Activated CD4-positive, alpha-beta memory T cell treated with anti-CD3 and anti-CD28 coated beads for 36 hours (primary cell): ENCODE measurements at regions of chr12 and their contacts with region 1.

Region 1: GRCh38 chr12:91811481-91812287 is 334.0 kb downstream of the BTG1 start:
- DNase-seq: peak; percentile 80
- H3K4me3 Mint-ChIP-seq: no peak overlapping the region
- H3K27ac Mint-ChIP-seq: no peak overlapping the region
- H3K4me1 Mint-ChIP-seq: peaks cover 20% of the 10 kb centered on the region
- H3K27me3 Mint-ChIP-seq: no peaks in the 10 kb centered on the region

Region 2: DNA sequence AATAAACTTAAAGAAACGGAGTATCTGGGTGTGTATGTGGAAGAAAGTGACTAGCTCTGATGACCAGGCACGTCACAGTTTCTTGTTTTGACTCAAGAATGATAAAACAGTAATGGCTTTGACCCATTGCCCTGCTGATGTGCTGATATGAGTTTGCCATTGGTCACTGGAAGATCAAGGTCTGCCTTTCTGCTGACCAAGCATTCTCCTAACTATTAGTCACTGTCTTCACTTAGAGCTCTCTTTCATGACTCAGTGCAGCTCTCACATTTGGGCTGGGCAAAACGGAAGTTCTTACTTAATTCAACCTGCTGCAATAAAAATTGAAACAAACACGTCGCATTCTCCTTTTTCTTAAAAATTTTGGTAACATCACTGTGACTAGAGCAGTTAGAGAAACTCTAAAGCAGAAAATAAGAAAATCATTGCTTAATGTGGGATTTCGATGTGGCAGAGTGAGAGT is 32.7 kb before region 1 on chr12:
- CTCF ChIA-PET with region 1: interaction called, 15 read pairs
- POLR2A ChIA-PET with region 1: no interaction called
- intact Hi-C with region 1: loop called (anchors 2 kb)
- DNase-seq: peak; percentile 65
- H3K4me3 Mint-ChIP-seq: peak overlapping the region; percentile 48
- H3K27ac Mint-ChIP-seq: peak overlapping the region; percentile 75
- H3K4me1 Mint-ChIP-seq: peaks cover 27% of the 10 kb centered on the region
- H3K27me3 Mint-ChIP-seq: peaks cover 3% of the 10 kb centered on the region

Region 3: DNA sequence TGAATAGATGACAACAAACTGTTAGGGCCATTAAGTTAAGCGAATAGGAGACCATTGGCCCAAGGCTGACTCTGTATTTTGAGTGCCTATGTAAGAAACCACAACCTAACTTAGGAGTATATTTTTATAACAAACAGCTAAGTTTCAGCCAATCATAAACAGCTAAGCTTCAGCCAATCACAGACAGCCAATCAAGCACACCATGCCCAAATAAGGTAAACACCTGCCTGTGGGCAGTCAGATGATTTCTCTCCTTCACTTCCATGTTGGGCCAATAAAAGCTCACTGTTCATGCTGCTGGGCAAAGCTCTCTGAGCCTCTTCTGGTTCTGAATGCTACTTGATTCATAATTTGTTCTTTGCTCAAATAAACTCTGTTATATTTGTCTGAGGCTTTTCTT is 10.6 kb before region 1 on chr12:
- CTCF ChIA-PET with region 1: interaction called, 31 read pairs
- POLR2A ChIA-PET with region 1: no interaction called
- intact Hi-C with region 1: no loop called
- DNase-seq: no peak
- H3K4me3 Mint-ChIP-seq: no peak overlapping the region
- H3K27ac Mint-ChIP-seq: no peak overlapping the region
- H3K4me1 Mint-ChIP-seq: peaks cover 3% of the 10 kb centered on the region
- H3K27me3 Mint-ChIP-seq: no peaks in the 10 kb centered on the region

Region 4: GRCh38 chr12:91825999-91826398 is 14.3 kb after region 1 on chr12:
- CTCF ChIA-PET with region 1: interaction called, 29 read pairs
- POLR2A ChIA-PET with region 1: no interaction called
- intact Hi-C with region 1: no loop called
- DNase-seq: no peak
- H3K4me3 Mint-ChIP-seq: no peak overlapping the region
- H3K27ac Mint-ChIP-seq: no peak overlapping the region
- H3K4me1 Mint-ChIP-seq: no peaks in the 10 kb centered on the region
- H3K27me3 Mint-ChIP-seq: no peaks in the 10 kb centered on the region

Region 5: GRCh38 chr12:91854725-91855124 is 43.0 kb after region 1 on chr12:
- CTCF ChIA-PET with region 1: interaction called, 10 read pairs
- POLR2A ChIA-PET with region 1: no interaction called
- intact Hi-C with region 1: no loop called
- DNase-seq: no peak
- H3K4me3 Mint-ChIP-seq: no peak overlapping the region
- H3K27ac Mint-ChIP-seq: no peak overlapping the region
- H3K4me1 Mint-ChIP-seq: peaks cover 31% of the 10 kb centered on the region
- H3K27me3 Mint-ChIP-seq: no peaks in the 10 kb centered on the region

Region 6: GRCh38 chr12:91958816-91959215 is 147.1 kb after region 1 on chr12:
- CTCF ChIA-PET with region 1: interaction called, 4 read pairs
- POLR2A ChIA-PET with region 1: no interaction called
- intact Hi-C with region 1: loop called (anchors 10 kb)
- DNase-seq: no peak
- H3K4me3 Mint-ChIP-seq: no peak overlapping the region
- H3K27ac Mint-ChIP-seq: no peak overlapping the region
- H3K4me1 Mint-ChIP-seq: no peaks in the 10 kb centered on the region
- H3K27me3 Mint-ChIP-seq: no peaks in the 10 kb centered on the region

Region 7: DNA sequence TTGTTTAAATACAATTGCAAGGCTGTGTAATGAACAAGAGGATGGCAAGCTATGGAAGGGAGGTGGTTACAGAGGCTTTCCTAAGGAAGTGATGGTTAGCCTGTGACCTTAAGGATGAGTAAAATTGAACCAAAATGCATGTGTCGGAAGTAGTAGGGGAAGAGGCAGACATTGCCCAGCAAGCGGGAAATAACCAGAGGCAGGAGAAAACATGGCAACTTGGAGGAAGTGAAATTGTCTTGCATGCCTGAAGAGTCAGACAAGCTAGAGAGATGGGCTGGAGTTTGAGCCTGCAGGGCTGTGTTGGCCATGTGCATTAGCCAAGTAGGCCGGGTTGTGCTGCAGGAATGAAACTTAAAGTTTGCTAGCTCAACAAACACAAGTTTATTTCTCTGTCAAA is 237.7 kb after region 1 on chr12:
- CTCF ChIA-PET with region 1: no interaction called
- POLR2A ChIA-PET with region 1: no interaction called
- intact Hi-C with region 1: loop called (anchors 5 kb)
- DNase-seq: no peak
- H3K4me3 Mint-ChIP-seq: no peak overlapping the region
- H3K27ac Mint-ChIP-seq: no peak overlapping the region
- H3K4me1 Mint-ChIP-seq: peaks cover 70% of the 10 kb centered on the region
- H3K27me3 Mint-ChIP-seq: no peaks in the 10 kb centered on the region

Region 8: DNA sequence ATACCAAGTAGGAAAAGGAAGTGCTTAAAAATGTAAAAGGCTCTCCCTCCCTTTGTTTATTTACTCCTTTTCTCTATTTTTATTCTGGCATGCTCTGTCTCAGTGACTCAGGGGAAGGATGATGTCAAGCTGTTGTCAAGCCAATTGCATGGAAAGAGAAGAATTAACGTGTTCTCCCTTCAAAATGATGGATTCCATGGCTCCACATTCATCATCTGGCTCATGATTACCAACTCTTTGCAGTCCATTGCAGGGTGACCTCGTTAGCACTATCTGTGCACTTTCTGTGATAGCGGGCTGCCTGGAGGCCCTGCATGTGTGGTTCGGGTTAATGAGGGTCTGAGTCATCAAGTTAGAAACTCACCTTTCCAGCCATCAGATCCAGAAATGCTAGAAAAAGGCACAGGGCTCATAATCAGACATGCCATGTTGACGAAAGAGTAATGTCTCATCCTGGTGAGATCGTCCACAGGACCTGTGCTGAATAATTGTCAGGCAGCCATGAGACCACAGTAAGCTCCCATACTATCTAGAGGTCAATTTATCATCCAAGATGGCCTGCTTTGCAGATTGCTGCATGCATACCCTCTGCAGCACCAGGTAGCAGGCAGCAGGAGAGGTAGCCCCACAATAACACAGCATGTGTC is 413.1 kb after region 1 on chr12:
- CTCF ChIA-PET with region 1: no interaction called
- POLR2A ChIA-PET with region 1: no interaction called
- intact Hi-C with region 1: no loop called
- DNase-seq: no peak
- H3K4me3 Mint-ChIP-seq: no peak overlapping the region
- H3K27ac Mint-ChIP-seq: no peak overlapping the region
- H3K4me1 Mint-ChIP-seq: peaks cover 4% of the 10 kb centered on the region
- H3K27me3 Mint-ChIP-seq: no peaks in the 10 kb centered on the region